Stomach (tissue), 19 donors: ENCODE measurements at regions of chr19 and their contacts with region 1.

Region 1: DNA sequence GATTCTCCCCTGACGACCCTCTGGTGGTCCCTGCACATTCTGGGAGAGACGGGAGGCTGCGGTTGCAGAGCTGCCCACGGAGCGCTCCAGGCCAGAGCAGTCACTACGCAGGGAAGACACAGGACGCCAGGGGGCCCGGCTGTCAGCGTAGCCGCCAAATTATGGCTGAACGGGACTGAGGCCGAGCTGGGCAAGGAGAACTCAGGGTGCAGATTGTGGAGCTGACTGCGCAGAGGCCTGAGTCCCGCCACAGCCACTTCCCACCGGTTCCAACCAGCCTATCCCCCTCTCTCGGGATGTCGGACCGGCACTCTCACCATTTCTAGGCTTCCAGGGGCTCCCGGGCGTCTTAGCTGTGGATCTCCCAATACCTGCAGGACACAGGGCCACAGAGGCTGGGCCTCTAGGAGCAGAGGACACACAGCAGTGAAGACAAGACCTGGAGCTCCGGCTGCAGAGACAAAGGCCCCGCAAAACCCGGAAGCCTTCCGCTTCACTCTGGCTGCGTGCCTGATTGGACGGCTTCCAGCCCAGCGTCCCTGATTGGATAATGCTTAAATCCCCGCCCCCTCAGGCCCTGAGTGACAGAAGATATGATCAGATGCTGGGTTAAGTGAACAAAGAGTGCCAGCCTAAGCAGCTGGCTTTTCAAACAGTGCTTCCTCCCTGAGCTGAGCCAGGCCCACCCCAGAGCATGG is at the start of gene ZNF737:
- DNase-seq: peak; percentile 98
- H3K4me3 ChIP-seq: peak within 1 kb of the TSS; percentile 65 to 77 (median 72)
- H3K27ac ChIP-seq: peak within 1 kb of the TSS; percentile 83 to 98 (median 89)
- H3K4me1 ChIP-seq: peaks cover 0 to 49% (median 12%) of the 10 kb centered on the region in 4 donors
- H3K27me3 ChIP-seq: no peaks in the 10 kb centered on the region
- CTCF ChIP-seq: peak in 4 of 7 experiments; percentile 12 to 31 (median 16)
- EP300 ChIP-seq: no peak
- POLR2A ChIP-seq: no peak
- total RNA-seq, gene ZNF737: 15.2 to 87.8 (median 32.5) TPM

Region 2: DNA sequence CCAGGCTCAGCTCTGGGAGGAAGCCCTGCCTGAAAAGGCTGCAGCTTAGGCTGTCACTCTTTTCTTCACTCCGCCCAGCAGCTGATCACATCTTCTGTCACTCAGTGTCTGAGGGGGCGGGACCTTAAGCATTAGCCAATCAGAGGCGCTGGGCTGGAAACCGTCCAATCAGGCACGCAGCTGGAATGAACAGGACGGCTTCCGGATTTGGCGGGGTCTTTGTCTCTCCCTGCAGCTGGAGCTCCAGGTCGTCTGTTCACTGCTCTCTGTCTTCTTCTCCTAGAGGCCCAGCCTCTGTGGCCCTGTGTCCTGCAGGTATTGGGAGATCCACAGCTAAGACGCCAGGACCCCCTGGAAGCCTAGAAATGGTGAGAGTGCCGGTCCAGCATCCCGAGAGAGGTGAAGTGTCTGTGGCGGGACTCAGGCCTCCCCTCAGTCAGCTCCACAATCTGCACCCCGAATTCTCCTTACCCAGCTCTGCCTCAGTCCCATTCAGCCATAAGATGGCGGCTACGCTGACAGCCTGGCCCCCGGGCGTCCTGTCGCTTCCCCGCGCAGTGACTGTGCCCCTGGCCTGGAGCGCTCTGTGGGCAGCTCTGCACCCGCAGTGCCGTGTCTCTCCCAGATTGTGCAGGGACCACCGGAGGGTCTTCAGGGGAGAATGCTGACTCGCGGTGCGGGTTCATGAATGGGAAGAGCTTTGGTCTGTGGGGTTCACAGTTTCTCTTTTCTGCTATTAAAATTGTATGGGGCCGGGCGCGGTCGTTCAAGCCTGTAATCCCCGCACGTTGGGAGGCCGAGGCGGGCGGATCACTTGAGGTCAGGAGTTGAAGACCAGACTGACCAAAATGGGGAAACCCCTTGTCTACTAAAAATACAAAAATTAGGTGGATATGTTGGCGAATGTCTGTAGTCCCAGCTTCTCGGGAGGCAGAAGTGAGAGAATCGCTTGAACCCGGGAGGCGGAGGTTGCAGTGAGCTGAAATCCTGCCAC is 210.9 kb after region 1 on chr19 and contains the start of gene ZNF66:
- intact Hi-C with region 1: loop called (anchors 10 kb)
- DNase-seq: peak; percentile 98
- H3K4me3 ChIP-seq: peak within 1 kb of the TSS; percentile 74 to 90 (median 86)
- H3K27ac ChIP-seq: peak within 1 kb of the TSS; percentile 77 to 86 (median 81)
- H3K4me1 ChIP-seq: peaks cover 0 to 13% (median 0%) of the 10 kb centered on the region in 4 donors
- H3K27me3 ChIP-seq: no peaks in the 10 kb centered on the region
- CTCF ChIP-seq: no peak
- EP300 ChIP-seq: no peak
- POLR2A ChIP-seq: peak in 1 of 4 donors; percentile 67
- total RNA-seq, gene ZNF66: 1.4 to 47.8 (median 21.7) TPM